WTC11 (cell line): ENCODE measurements at regions of chr12 and their contacts with region 1.

Region 1: DNA sequence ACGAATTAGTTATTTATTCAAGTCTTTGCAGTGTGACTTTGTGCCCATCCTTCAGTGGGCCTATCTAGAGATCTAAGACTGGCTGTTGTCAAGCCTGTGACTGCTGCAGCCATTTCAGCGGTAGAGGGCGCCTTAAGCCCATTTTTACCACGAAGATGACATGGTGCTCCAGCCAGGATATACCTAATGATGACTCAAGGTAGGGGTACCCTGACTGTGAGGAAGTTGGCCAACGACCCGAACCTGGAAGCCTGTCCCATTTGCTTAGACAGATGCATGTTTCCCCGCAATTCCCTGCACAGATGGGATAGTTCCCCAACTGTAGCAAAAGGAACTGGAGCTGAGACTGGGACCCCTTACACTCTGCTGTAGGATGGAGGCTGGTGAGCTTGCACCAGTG is 41.3 kb downstream of the RAB3IP start:
- DNase-seq: peak; percentile 82
- ATAC-seq: peak; percentile 99
- H3K4me3 Mint-ChIP-seq: peak overlapping the region; percentile 69
- H3K27ac Mint-ChIP-seq: no peak overlapping the region; the same call in 1 of the 2 replicates
- H3K4me1 Mint-ChIP-seq: peaks cover 17% of the 10 kb centered on the region
- H3K27me3 Mint-ChIP-seq: no peaks in the 10 kb centered on the region
- CTCF ChIP-seq: peak; percentile 58; the same call in 1 of the 2 replicates

Region 2: DNA sequence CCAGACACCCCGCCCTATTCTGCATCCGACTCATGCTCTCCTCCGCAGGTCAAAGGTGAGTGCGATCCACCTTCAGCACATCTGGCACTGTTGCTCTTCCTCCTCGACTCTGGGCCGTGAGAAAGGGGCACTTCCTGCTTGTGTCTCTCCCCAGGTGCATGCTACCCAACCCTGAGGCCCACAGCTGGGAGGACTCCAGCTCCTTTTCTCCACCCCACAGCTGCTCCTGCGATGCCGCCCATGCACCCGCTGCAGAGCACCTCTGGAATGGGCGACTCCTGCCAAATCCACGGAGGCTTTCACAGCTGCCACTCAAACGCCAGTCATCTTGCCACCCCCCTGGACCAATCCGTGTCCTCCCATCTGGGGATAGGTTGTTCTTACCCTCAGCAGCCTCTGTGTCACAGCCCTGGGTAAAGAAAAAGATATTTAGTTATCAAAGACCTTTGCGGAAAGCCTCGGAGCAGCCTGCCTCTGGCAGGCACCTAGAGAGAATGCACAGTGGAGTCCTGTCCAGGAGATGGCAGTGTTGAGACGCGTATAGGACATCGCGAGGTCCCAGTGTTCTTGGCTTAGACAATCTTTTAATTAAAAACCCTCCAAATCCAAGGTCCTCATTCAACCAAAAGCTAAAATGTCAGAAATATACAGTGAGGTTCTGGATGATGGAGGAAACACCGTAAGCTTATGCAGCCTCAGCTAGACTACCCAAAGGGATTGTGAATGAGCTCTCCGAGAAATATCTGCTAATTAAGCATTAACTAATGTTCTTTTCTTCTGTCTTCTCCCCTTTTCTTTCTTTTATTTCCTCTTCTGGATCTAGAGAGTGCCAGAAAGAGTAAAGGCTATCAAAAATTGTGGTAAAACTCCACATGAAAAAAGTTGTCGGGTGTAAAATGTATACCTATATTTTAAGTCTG is 99.4 kb after region 1 on chr12:
- CTCF ChIA-PET with region 1: interaction called, 16 read pairs
- POLR2A ChIA-PET with region 1: no interaction called
- DNase-seq: peak; percentile 77
- ATAC-seq: peak; percentile 83
- H3K4me3 Mint-ChIP-seq: no peak overlapping the region
- H3K27ac Mint-ChIP-seq: no peak overlapping the region
- H3K4me1 Mint-ChIP-seq: peaks cover 24% of the 10 kb centered on the region
- H3K27me3 Mint-ChIP-seq: no peaks in the 10 kb centered on the region
- CTCF ChIP-seq: peak; percentile 80; the same call in 1 of the 2 replicates